ENCODE measurements at regions of chr12 and their contacts with region 1.

Region 1: GRCh38 chr12:52879394-52880351 is 25.2 kb downstream of the KRT8 start:
- DNase-seq: peak; percentile 80 to 81
- H3K4me3 ChIP-seq: peak overlapping the region; percentile 31; the same call in 1 of the 2 replicates
- H3K27ac ChIP-seq: peak overlapping the region; percentile 51
- H3K4me1 ChIP-seq: peaks cover 19% of the 10 kb centered on the region
- H3K27me3 ChIP-seq: no peaks in the 10 kb centered on the region
- CTCF ChIP-seq: peak; percentile 86

Region 2: DNA sequence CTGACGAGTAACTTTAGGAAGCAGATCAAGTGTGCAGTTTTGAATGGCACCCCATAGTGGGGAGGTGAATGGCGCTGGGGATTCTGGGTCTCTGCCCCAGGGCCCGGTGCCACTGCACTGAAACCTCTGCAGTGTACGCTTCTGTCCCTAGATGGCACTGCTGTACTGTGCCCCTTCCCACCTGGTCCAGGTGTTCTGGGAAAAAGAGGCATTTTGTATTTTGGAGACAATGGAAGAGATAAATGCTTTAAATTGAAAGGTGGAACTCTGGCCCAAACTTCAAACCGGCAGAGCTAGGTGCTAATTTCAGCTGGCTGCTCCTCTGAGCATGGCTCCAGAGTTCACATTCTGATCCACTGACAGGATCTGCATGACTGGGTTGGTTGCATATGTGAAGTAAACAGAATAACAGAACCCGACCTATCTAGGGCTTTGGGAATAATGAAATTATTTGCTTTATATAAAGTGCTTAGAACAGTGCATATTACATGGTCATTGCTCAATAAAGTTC is 740.1 kb before region 1 on chr12:
- CTCF ChIA-PET with region 1: interaction called, 3 read pairs
- POLR2A ChIA-PET with region 1: interaction called, 6 read pairs
- intact Hi-C with region 1: loop called (anchors 1 kb)
- DNase-seq: peak; percentile 62 to 78
- H3K4me3 ChIP-seq: no peak overlapping the region
- H3K27ac ChIP-seq: no peak overlapping the region
- H3K4me1 ChIP-seq: peaks cover 22% of the 10 kb centered on the region
- H3K27me3 ChIP-seq: no peaks in the 10 kb centered on the region
- CTCF ChIP-seq: peak; percentile 94

Region 3: GRCh38 chr12:52251367-52252055 is 628.2 kb before region 1 on chr12:
- CTCF ChIA-PET with region 1: interaction called, 14 read pairs
- POLR2A ChIA-PET with region 1: interaction called, 5 read pairs
- intact Hi-C with region 1: no loop called
- DNase-seq: no peak
- H3K4me3 ChIP-seq: no peak overlapping the region
- H3K27ac ChIP-seq: peak overlapping the region; percentile 36
- H3K4me1 ChIP-seq: peaks cover 31% of the 10 kb centered on the region
- H3K27me3 ChIP-seq: no peaks in the 10 kb centered on the region
- CTCF ChIP-seq: no peak

Region 4: DNA sequence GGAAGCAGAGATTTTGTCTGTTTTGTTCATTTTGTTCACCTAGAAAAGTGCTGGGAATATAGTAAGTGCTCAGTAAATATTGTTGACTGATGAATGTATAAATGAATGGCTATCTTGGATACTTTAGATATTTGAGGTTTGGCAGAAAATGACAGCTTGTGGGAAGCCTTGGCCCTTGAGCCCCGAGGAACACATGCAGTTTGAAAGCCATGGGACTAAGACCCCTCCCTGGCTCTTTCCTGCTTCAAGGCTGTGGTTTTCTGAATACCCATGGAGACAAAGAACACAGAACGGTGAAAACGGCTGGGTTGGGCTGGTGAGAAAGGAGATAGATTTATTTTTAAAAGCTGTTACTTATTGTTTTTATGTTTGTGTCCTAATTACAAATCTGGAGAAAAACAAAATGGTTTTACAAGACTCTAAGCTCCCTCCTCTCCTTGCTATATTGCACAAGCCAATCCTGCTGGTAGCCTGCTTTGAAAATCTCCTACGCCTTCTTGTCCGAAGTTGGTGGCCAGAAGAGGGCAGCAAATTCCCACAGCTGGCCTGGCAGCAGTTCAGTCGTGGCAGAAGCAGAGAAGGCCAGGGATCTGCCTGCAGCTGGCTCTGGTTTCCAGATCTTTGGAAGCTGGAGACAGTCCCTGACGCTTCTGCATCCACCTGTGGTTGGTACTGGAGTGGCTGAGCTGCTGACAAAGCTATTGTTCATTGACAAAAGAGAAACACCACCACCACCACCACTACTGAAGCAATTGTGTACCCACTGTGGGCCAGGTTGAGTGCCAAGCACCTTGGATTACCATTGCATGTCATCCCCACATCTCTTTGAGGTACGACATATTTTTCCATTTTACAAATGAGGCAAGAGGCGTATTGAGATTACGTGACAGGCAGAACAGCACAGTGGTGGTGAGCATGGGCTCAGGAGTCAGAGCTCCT is 507.2 kb before region 1 on chr12:
- CTCF ChIA-PET with region 1: interaction called, 20 read pairs
- POLR2A ChIA-PET with region 1: interaction called, 3 read pairs
- intact Hi-C with region 1: loop called (anchors 1 kb)
- DNase-seq: peak; percentile 73 to 84
- H3K4me3 ChIP-seq: no peak overlapping the region
- H3K27ac ChIP-seq: no peak overlapping the region
- H3K4me1 ChIP-seq: peaks cover 9% of the 10 kb centered on the region
- H3K27me3 ChIP-seq: no peaks in the 10 kb centered on the region
- CTCF ChIP-seq: peak; percentile 90

Region 5: GRCh38 chr12:52813885-52814711 is 65.6 kb before region 1 on chr12 and contains the start of gene KRT4:
- CTCF ChIA-PET with region 1: no interaction called
- POLR2A ChIA-PET with region 1: no interaction called
- intact Hi-C with region 1: no loop called
- DNase-seq: peak; percentile 41 to 66
- H3K4me3 ChIP-seq: no peak within 1 kb of the TSS
- H3K27ac ChIP-seq: no peak within 1 kb of the TSS
- H3K4me1 ChIP-seq: peaks cover 8% of the 10 kb centered on the region
- H3K27me3 ChIP-seq: no peaks in the 10 kb centered on the region; the same call in 1 of the 2 replicates
- CTCF ChIP-seq: no peak
- total RNA-seq, gene KRT4: 3.0 and 5.3 TPM in 2 replicates

Region 6: DNA sequence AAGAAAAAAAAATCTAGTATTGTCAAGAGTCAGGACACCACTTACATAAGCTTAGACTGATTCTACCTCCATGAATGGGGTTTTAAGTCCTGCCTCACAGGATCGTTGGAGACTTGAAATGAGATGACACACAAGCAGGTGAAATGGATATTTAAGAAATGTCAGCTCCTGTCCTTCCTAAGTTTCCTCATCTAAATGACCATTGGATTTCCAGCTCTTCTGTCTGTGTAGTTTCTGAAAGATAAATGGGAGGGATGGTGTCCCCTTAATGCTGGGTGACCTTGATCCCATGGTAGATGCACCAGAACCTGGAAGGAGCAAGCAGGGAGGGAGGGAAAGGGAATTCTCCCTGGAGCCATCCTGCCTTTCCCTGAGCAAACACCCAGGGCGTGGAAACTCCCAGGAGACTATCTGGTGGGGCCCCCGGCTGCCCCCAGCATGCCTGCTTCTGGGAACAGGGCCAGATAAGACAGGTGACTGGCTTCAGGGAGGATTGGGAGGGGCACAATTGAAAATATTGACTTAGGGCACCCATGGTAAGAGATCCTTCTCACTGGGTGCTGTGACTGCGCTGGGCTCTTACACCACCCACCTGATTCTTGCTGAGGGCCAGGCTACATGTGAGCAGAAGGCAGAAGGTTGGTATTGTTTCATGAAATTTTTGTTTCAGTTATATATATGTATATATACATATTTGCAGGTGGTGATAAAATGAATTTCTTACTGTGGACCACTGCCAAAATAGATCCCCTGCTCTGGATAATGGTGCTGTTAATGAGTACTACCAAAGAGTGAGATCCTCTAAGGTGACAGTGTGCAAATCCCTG is 15.6 kb after region 1 on chr12:
- CTCF ChIA-PET with region 1: interaction called, 22 read pairs
- POLR2A ChIA-PET with region 1: no interaction called
- intact Hi-C with region 1: no loop called
- DNase-seq: peak; percentile 84 to 92
- H3K4me3 ChIP-seq: no peak overlapping the region
- H3K27ac ChIP-seq: peak overlapping the region; percentile 93
- H3K4me1 ChIP-seq: peaks cover 56% of the 10 kb centered on the region
- H3K27me3 ChIP-seq: no peaks in the 10 kb centered on the region
- CTCF ChIP-seq: no peak

Region 7: DNA sequence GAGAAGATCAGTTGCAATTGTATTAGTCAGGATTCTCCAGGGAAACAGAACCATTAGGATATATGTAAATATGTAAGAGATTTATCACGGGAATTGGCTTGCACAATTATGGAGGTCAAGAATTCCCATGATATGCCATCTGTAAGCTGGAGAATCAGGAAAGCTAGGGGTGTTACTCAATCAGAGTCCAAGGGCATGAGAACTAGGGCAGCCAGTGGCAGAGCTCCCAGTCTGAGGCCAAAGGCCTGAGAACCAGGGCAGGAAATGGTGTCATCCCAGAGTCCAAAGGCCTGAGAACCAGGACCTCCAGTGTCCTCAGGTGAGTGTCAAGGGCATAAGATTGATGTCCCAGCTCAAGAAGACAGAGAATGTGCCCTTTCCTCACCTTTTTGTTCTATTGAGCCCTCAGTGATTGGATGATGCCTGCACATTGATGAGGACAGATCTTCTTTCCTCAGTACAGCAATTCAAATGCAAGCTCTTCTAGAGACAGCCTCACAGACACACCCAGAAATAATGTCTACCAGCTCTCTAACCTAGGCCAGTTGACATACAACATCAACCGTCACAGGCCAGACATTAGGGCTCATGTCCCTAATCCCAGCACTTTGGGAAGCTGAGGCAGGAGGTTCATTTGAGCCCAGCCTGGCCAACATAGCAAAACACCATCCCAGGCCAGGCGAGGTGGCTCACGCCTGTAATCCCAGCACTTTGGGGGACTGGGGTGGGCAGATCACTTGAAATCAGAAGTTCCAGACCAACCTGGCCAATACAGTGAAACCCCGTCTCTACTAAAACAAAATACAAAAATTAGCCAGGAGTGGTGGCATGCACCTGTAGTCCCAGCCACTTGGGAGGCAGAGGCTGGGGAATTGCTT is 265.9 kb after region 1 on chr12:
- CTCF ChIA-PET with region 1: no interaction called
- POLR2A ChIA-PET with region 1: no interaction called
- intact Hi-C with region 1: no loop called
- DNase-seq: no peak
- H3K4me3 ChIP-seq: no peak overlapping the region
- H3K27ac ChIP-seq: no peak overlapping the region
- H3K4me1 ChIP-seq: no peaks in the 10 kb centered on the region
- H3K27me3 ChIP-seq: no peaks in the 10 kb centered on the region
- CTCF ChIP-seq: no peak

Measured in PC-9 (cell line).